ENCODE measurements at regions of chr5 and their contacts with region 1.

Region 1: DNA sequence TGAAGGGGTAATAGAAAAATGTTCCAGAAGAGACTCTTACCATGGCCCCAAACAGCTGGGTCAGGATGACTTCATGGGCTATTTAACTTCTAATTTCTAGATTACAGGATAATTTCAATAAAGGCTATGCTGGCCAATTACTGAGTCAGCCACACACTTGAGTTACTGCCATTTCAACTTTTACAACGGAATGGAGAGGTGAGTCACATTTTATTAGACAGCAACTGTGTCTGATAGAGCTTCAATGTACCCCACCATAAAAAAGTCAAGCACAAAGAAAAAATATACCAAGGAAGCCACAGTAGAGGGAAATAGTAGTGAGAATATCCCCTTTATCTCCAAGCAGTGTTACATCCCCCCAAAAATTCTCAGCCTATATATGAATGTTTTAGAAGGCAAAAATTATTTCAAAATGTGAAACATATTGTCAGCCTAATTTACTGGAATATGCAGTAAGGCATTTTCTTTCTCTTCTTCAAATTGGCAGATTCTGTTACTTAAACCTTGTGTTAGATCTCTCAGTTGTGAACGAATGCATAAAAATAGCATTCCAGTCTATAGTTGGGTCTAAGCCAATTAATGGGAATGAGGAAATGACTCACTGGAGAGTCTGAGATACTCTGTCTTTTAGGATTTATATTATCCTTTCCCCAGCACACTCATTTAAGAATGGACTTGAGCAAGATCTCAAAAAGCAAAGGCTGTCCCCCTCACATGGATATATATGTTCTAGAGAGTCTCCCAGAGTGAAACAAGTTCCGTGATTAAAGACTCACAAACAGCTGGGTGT is 47.1 kb upstream of the RAI14 start:
- DNase-seq: peak; percentile 83
- H3K27ac ChIP-seq: peak overlapping the region; percentile 83
- CTCF ChIP-seq: no peak

Region 2: DNA sequence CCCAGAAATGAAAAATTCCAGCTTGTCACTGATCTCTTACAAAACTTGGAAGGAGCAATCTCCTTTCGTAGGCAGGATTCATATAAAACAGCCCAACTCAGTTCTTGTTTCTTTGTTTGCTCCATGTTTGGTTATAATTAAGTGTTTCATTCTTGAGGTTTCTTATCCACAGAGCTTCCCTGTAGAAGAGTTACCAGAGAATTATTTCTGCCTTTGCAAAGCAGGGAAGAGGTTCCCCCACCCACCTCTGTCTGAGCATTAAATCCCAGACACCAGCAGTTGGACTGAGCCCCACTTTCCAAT is 13.0 kb after region 1 on chr5:
- CTCF ChIA-PET with region 1: no interaction called
- POLR2A ChIA-PET with region 1: interaction called, 10 read pairs
- DNase-seq: no peak
- H3K27ac ChIP-seq: no peak overlapping the region
- CTCF ChIP-seq: no peak

Region 3: DNA sequence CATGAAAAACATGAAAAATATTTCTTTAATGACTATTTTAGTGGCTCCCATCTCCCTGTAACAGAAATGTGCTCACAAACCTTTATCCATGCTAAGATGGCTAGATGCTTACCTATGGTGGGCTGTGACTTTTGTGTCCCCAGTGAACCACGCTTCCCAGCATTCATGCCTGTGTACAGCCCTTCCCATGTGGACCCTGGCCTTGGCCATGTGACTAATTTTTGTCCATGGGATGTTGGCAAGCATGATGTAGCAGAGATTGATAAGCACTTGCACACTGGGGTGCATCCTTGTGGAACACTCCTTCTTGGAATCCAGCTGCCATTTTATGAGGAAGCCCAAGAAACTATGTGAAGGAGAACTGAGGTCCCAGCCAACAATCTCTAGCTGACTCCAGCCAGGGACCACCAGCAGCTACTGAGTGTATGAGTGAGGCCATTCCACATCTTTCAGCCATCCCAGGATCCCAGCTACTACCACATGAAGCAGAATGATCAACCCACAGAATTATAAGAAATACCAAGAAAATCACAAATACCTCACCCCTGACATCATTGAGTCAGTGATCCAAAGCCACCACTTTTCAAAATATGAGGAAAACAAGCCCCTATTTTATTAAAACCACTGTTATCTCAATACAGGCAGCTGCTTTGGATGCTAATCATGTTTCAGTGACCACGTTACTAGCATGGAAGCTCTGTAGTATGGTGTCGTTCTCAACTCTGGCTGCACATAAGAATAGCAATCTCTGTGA is 31.0 kb after region 1 on chr5:
- CTCF ChIA-PET with region 1: no interaction called
- POLR2A ChIA-PET with region 1: no interaction called
- DNase-seq: no peak
- H3K27ac ChIP-seq: no peak overlapping the region
- CTCF ChIP-seq: no peak